Activated CD4-positive, alpha-beta T cell treated with anti-CD3 and anti-CD28 coated beads for 36 hours (primary cell): ENCODE measurements at regions of chr11 and their contacts with region 1.

Region 1: DNA sequence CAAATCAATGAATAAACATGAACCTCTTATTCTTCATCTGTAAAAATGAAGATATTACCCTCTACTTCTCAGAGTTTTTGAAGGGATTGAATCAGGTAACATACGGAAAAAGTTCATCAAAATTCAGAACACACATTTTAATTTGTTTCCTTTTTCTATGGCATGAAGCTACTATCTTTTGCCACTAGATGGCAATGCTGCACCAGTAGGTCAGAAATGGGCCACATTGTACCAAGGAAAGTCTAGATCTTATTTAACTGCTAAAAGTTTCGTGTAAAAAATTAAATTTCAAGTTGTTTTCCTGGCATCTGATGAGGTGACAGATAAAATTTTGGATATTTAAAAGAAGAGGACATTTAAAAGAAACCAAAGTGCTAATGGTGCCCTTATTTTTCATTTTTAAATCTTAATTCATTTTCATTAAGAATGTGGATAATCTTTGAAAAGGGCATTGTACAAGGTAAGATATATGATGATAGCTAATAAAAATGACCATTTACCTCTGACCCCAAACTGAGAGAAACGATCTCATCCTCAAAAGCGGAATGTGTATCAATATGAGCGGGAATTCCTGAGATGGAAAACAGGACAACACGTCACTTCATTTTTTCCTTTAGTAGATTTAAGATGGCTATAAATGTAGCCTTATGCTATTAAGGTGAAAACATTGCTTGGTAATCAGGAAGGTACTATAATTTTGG is 16.1 kb downstream of the ALKBH8 start:
- DNase-seq: peak; percentile 45
- ATAC-seq: peak; percentile 65
- H3K4me3 Mint-ChIP-seq: no peak overlapping the region
- H3K27ac Mint-ChIP-seq: no peak overlapping the region
- H3K4me1 Mint-ChIP-seq: peaks cover 11% of the 10 kb centered on the region
- H3K27me3 Mint-ChIP-seq: no peaks in the 10 kb centered on the region

Region 2: DNA sequence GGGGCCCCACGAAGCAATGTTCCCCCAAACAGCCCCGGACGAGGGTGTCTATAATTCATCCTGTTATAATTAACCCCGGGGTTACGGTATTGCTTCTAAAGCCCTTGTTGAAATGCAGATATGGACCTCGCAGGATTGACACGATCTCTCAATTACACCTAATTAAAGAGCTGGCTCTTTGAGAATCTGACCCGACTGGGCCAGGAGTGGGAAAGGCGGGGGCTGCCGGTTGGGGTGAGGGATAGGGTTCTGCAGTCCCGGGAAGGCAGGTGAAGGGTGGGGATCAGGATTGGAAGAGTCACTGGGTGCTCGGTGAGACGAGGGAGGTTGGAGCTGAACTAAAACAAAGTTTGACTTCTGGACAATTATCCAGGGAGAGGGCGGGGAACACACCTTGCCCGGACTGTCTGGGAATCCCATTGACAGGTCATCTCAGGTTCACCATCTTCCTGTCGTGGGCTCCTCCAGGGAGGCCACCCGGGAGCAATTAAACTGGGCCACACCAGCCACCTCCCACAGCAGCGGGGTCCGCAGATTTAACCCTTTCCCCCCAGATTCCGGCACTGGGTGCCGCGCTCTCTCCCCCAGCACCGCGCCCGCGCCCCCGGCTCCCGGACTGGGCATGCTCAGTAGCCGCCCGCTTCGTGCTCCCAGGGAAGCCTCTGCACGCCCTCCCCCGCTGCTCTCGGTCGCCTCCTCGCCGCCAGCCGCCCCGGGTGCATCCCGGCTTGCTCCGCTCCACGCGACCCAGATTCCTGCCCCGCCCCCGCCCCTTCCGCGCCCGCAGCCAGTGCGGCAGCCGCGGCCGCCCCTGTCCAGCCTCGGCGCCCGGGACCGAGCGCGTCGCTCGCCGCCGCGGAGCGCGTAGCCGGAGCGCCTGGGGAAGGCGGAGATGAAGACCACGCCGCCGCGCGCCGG is 41.3 kb after region 1 on chr11 and contains the start of gene ELMOD1:
- CTCF ChIA-PET with region 1: interaction called, 3 read pairs
- POLR2A ChIA-PET with region 1: no interaction called
- intact Hi-C with region 1: loop called in 1 of 2 experiments (anchors 5 kb)
- DNase-seq: peak; percentile 69
- ATAC-seq: peak; percentile 66
- H3K4me3 Mint-ChIP-seq: peak within 1 kb of the TSS; percentile 73
- H3K27ac Mint-ChIP-seq: peak within 1 kb of the TSS; percentile 66
- H3K4me1 Mint-ChIP-seq: peaks cover 19% of the 10 kb centered on the region
- H3K27me3 Mint-ChIP-seq: peaks cover 67% of the 10 kb centered on the region
- total RNA-seq, gene ELMOD1: not detected

Region 3: GRCh38 chr11:107689317-107690202 is 140.2 kb after region 1 on chr11:
- CTCF ChIA-PET with region 1: interaction called, 46 read pairs
- POLR2A ChIA-PET with region 1: no interaction called
- intact Hi-C with region 1: loop called (anchors 1 kb)
- DNase-seq: peak; percentile 77
- ATAC-seq: peak; percentile 73
- H3K4me3 Mint-ChIP-seq: no peak overlapping the region
- H3K27ac Mint-ChIP-seq: no peak overlapping the region
- H3K4me1 Mint-ChIP-seq: no peaks in the 10 kb centered on the region
- H3K27me3 Mint-ChIP-seq: peaks cover 6% of the 10 kb centered on the region

Region 4: DNA sequence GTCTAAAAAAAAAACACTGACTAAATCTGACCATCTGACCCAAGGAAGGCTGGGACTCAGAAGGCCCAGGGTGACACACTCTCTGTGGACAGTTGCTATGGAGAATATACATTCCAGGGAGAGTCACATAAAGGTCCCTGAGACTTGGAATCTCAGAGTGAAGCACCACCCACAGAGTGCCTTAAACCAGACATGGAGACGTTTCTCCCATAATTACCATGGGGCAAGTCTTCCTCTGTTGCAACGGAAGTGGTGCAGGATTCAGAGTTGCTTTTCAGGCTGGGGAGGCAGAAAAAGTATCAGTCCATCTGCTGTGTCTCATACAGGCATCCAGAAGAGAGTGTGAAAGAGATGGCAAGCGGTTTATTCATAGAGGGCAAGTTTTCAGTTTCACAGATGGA is 221.1 kb after region 1 on chr11:
- CTCF ChIA-PET with region 1: interaction called, 6 read pairs
- POLR2A ChIA-PET with region 1: no interaction called
- intact Hi-C with region 1: loop called in 1 of 2 experiments (anchors 1 kb)
- DNase-seq: no peak
- ATAC-seq: peak; percentile 35
- H3K4me3 Mint-ChIP-seq: no peak overlapping the region
- H3K27ac Mint-ChIP-seq: no peak overlapping the region
- H3K4me1 Mint-ChIP-seq: peaks cover 9% of the 10 kb centered on the region
- H3K27me3 Mint-ChIP-seq: peaks cover 6% of the 10 kb centered on the region

Region 5: GRCh38 chr11:107804211-107804610 is 254.8 kb after region 1 on chr11:
- CTCF ChIA-PET with region 1: no interaction called
- POLR2A ChIA-PET with region 1: no interaction called
- intact Hi-C with region 1: no loop called
- DNase-seq: no peak
- ATAC-seq: no peak
- H3K4me3 Mint-ChIP-seq: no peak overlapping the region
- H3K27ac Mint-ChIP-seq: no peak overlapping the region
- H3K4me1 Mint-ChIP-seq: no peaks in the 10 kb centered on the region
- H3K27me3 Mint-ChIP-seq: no peaks in the 10 kb centered on the region